ENCODE measurements at regions of chr5 and their contacts with region 1.

Region 1: GRCh38 chr5:108642167-108642906 is 105.4 kb upstream of the FER start:
- DNase-seq: peak; percentile 64
- ATAC-seq: peak; percentile 79
- H3K4me3 ChIP-seq: no peak overlapping the region
- H3K4me3 Mint-ChIP-seq: no peak overlapping the region
- H3K27ac ChIP-seq: no peak overlapping the region
- H3K27ac Mint-ChIP-seq: no peak overlapping the region
- H3K4me1 ChIP-seq: peaks cover 0 to 3% of the 10 kb centered on the region in 2 donors
- H3K4me1 Mint-ChIP-seq: peaks cover 2% of the 10 kb centered on the region
- H3K27me3 ChIP-seq: peaks cover 0 to 4% (median 0%) of the 10 kb centered on the region in 4 experiments
- H3K27me3 Mint-ChIP-seq: peaks cover 11% of the 10 kb centered on the region
- CTCF ChIP-seq: peak; percentile 83

Region 2: DNA sequence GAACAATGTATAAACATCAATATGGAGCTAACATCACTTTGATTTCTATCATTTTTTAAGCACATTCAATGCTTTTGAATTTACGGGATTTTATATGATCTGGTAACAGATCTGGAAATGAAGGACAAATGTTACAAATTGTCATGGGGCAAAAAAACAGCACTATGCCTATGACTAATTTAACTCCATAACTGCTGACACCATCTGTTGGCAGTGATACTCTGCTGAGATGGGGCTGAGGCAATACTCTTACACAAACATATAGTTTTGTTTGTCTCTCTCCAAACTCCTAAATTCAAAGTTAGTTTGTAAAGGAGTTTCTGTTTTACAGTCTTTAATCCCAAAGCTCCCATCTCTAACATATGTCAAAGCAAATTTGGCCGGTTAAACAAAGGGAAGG is 27.1 kb before region 1 on chr5:
- CTCF ChIA-PET with region 1: no interaction called
- POLR2A ChIA-PET with region 1: no interaction called
- intact Hi-C with region 1: no loop called
- DNase-seq: no peak
- ATAC-seq: no peak
- H3K4me3 ChIP-seq: no peak overlapping the region
- H3K4me3 Mint-ChIP-seq: no peak overlapping the region
- H3K27ac ChIP-seq: no peak overlapping the region
- H3K27ac Mint-ChIP-seq: no peak overlapping the region
- H3K4me1 ChIP-seq: no peaks in the 10 kb centered on the region
- H3K4me1 Mint-ChIP-seq: no peaks in the 10 kb centered on the region
- H3K27me3 ChIP-seq: no peaks in the 10 kb centered on the region
- H3K27me3 Mint-ChIP-seq: peaks cover 7% of the 10 kb centered on the region
- CTCF ChIP-seq: no peak

Region 3: DNA sequence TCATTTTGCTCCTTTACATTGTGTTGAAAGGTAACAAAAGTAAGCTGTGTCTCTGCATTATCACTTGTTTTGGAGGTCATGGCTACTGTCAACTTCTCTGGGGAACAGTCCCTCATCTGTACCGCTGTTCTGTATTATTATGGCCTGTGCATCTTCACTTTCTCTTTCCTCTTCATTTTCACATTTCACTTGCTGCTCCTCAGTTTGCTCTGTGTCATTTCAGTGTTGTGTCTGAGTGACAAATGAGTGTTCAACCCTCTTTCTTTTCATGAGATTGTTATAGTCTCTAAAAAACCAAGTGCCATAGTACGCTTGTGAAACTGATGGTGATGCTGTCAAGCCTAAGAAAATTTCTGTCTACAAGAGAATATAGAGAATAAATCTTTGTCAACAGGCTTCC is 16.7 kb before region 1 on chr5:
- CTCF ChIA-PET with region 1: no interaction called
- POLR2A ChIA-PET with region 1: no interaction called
- intact Hi-C with region 1: no loop called
- DNase-seq: no peak
- ATAC-seq: no peak
- H3K4me3 ChIP-seq: no peak overlapping the region
- H3K4me3 Mint-ChIP-seq: no peak overlapping the region
- H3K27ac ChIP-seq: no peak overlapping the region
- H3K27ac Mint-ChIP-seq: no peak overlapping the region
- H3K4me1 ChIP-seq: no peaks in the 10 kb centered on the region
- H3K4me1 Mint-ChIP-seq: no peaks in the 10 kb centered on the region
- H3K27me3 ChIP-seq: no peaks in the 10 kb centered on the region
- H3K27me3 Mint-ChIP-seq: peaks cover 8% of the 10 kb centered on the region
- CTCF ChIP-seq: no peak

Region 4: GRCh38 chr5:109468737-109469420 is 826.5 kb after region 1 on chr5:
- CTCF ChIA-PET with region 1: interaction called, 5 read pairs
- POLR2A ChIA-PET with region 1: no interaction called
- intact Hi-C with region 1: loop called (anchors 1 kb)
- DNase-seq: peak; percentile 87
- ATAC-seq: peak; percentile 97
- H3K4me3 ChIP-seq: no peak overlapping the region
- H3K4me3 Mint-ChIP-seq: no peak overlapping the region
- H3K27ac ChIP-seq: no peak overlapping the region
- H3K27ac Mint-ChIP-seq: no peak overlapping the region
- H3K4me1 ChIP-seq: peaks cover 0 to 3% of the 10 kb centered on the region in 2 donors
- H3K4me1 Mint-ChIP-seq: peaks cover 5% of the 10 kb centered on the region
- H3K27me3 ChIP-seq: no peaks in the 10 kb centered on the region
- H3K27me3 Mint-ChIP-seq: no peaks in the 10 kb centered on the region
- CTCF ChIP-seq: peak; percentile 70

Region 5: GRCh38 chr5:109479260-109479860 is 837.0 kb after region 1 on chr5:
- CTCF ChIA-PET with region 1: interaction called, 7 read pairs
- POLR2A ChIA-PET with region 1: no interaction called
- intact Hi-C with region 1: loop called (anchors 1 kb)
- DNase-seq: peak; percentile 22
- ATAC-seq: no peak
- H3K4me3 ChIP-seq: no peak overlapping the region
- H3K4me3 Mint-ChIP-seq: no peak overlapping the region
- H3K27ac ChIP-seq: no peak overlapping the region
- H3K27ac Mint-ChIP-seq: no peak overlapping the region
- H3K4me1 ChIP-seq: peaks cover 0 to 4% of the 10 kb centered on the region in 2 donors
- H3K4me1 Mint-ChIP-seq: peaks cover 1% of the 10 kb centered on the region
- H3K27me3 ChIP-seq: no peaks in the 10 kb centered on the region
- H3K27me3 Mint-ChIP-seq: peaks cover 10% of the 10 kb centered on the region
- CTCF ChIP-seq: peak; percentile 59

Measured in B cell (primary cell).